Activated CD4-positive, alpha-beta T cell treated with anti-CD3 and anti-CD28 coated beads, Interleukin-2, amount 10 ng/mL, durations not matched to agents 24 days and 14 days (primary cell): ENCODE measurements at regions of chr7 and their contacts with region 1.

Region 1: GRCh38 chr7:115988401-115988800 is 42.2 kb downstream of the TFEC start:
- DNase-seq: no peak
- H3K4me3 Mint-ChIP-seq: no peak overlapping the region
- H3K27ac Mint-ChIP-seq: no peak overlapping the region
- H3K4me1 Mint-ChIP-seq: no peaks in the 10 kb centered on the region
- H3K27me3 Mint-ChIP-seq: no peaks in the 10 kb centered on the region

Region 2: DNA sequence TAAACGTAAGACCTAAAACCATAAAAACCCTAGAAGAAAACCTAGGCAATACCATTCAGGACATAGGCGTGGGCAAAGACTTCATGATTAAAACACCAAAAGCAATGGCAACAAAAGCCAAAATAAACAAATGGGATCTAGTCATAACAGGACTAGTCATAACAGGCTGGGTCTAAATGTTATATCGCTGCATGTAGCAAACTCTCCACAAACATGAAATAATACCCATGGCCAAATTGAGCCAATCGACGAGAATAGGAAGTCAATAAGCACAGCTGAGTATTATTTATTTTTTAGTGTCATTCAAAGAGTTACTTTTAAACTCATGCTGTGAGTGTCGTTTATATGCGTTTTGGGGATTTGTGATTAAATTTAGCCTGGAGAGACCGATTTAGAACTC is 182.9 kb before region 1 on chr7:
- intact Hi-C with region 1: no loop called
- DNase-seq: no peak
- H3K4me3 Mint-ChIP-seq: no peak overlapping the region
- H3K27ac Mint-ChIP-seq: no peak overlapping the region
- H3K4me1 Mint-ChIP-seq: no peaks in the 10 kb centered on the region
- H3K27me3 Mint-ChIP-seq: no peaks in the 10 kb centered on the region

Region 3: GRCh38 chr7:116021237-116021636 is 32.8 kb after region 1 on chr7:
- intact Hi-C with region 1: loop called (anchors 1 kb)
- DNase-seq: no peak
- H3K4me3 Mint-ChIP-seq: no peak overlapping the region
- H3K27ac Mint-ChIP-seq: no peak overlapping the region
- H3K4me1 Mint-ChIP-seq: no peaks in the 10 kb centered on the region
- H3K27me3 Mint-ChIP-seq: no peaks in the 10 kb centered on the region